Motor neuron (in vitro differentiated cells): ENCODE measurements at regions of chr15 and their contacts with region 1.

Region 1: GRCh38 chr15:31974855-31975829 is 55.2 kb upstream of the CHRNA7 start:
- ATAC-seq: peak; percentile 57 to 95 (median 69)
- H3K4me3 ChIP-seq: peak overlapping the region in 3 of 5 donors; percentile 1 to 21 (median 15)
- H3K27ac ChIP-seq: no peak overlapping the region
- H3K4me1 ChIP-seq: no peaks in the 10 kb centered on the region

Region 2: GRCh38 chr15:31660816-31661215 is 314.3 kb before region 1 on chr15:
- in situ Hi-C with region 1: loop called in 1 of 9 experiments (anchors 25 kb)
- ATAC-seq: peak in 2 of 8 experiments; percentile 33 to 63
- H3K4me3 ChIP-seq: no peak overlapping the region
- H3K27ac ChIP-seq: no peak overlapping the region
- H3K4me1 ChIP-seq: no peaks in the 10 kb centered on the region